GM12878 (cell line): ENCODE measurements at regions of chr12 and their contacts with region 1.

Region 1: DNA sequence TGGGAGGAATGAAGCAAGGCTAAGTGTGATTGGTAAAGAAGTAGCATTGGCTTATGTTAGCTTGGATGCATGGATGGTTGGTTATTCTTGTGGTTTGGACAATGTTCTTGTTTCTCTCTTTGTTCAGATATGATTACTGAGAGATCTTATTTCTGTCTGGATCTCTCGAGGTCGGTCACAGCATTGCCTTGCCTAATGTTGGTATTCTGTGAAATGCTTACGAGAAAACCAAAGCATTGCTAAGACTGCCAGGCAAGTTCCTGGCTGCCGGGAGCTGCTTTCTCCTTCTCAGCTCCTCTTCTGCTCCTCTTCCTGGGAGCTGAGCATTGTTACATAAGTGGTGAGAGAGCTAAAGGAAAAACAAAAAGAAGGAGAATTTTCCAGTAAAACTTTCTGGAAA is 7.4 kb upstream of the RND1 start:
- DNase-seq: no peak
- ATAC-seq: no peak
- H3K4me3 ChIP-seq: no peak overlapping the region
- H3K27ac ChIP-seq: no peak overlapping the region
- H3K4me1 ChIP-seq: no peaks in the 10 kb centered on the region
- H3K27me3 ChIP-seq: no peaks in the 10 kb centered on the region
- CTCF ChIP-seq: no peak
- EP300 ChIP-seq: no peak
- POLR2A ChIP-seq: no peak
- RAD21 ChIP-seq: no peak

Region 2: GRCh38 chr12:48151103-48151771 is 721.9 kb before region 1 on chr12:
- CTCF ChIA-PET with region 1: no interaction called
- POLR2A ChIA-PET with region 1: no interaction called
- RAD21 ChIA-PET with region 1: no interaction called
- SMC1A ChIA-PET with region 1: no interaction called
- in situ Hi-C with region 1: no loop called
- intact Hi-C with region 1: loop called (anchors 5 kb)
- DNase-seq: no peak
- ATAC-seq: peak; percentile 54
- H3K4me3 ChIP-seq: no peak overlapping the region
- H3K27ac ChIP-seq: no peak overlapping the region
- H3K4me1 ChIP-seq: peaks cover 20% of the 10 kb centered on the region
- H3K27me3 ChIP-seq: no peaks in the 10 kb centered on the region
- CTCF ChIP-seq: no peak
- EP300 ChIP-seq: no peak
- POLR2A ChIP-seq: no peak
- RAD21 ChIP-seq: no peak

Region 3: GRCh38 chr12:48744251-48745008 is 128.7 kb before region 1 on chr12:
- CTCF ChIA-PET with region 1: no interaction called
- POLR2A ChIA-PET with region 1: no interaction called
- RAD21 ChIA-PET with region 1: no interaction called
- SMC1A ChIA-PET with region 1: no interaction called
- in situ Hi-C with region 1: no loop called
- intact Hi-C with region 1: no loop called
- DNase-seq: no peak
- ATAC-seq: no peak
- H3K4me3 ChIP-seq: no peak overlapping the region
- H3K27ac ChIP-seq: no peak overlapping the region
- H3K4me1 ChIP-seq: no peaks in the 10 kb centered on the region
- H3K27me3 ChIP-seq: no peaks in the 10 kb centered on the region
- CTCF ChIP-seq: no peak
- EP300 ChIP-seq: no peak
- POLR2A ChIP-seq: no peak
- RAD21 ChIP-seq: no peak